A549 (cell line): ENCODE measurements at regions of chr1 and their contacts with region 1.

Region 1: DNA sequence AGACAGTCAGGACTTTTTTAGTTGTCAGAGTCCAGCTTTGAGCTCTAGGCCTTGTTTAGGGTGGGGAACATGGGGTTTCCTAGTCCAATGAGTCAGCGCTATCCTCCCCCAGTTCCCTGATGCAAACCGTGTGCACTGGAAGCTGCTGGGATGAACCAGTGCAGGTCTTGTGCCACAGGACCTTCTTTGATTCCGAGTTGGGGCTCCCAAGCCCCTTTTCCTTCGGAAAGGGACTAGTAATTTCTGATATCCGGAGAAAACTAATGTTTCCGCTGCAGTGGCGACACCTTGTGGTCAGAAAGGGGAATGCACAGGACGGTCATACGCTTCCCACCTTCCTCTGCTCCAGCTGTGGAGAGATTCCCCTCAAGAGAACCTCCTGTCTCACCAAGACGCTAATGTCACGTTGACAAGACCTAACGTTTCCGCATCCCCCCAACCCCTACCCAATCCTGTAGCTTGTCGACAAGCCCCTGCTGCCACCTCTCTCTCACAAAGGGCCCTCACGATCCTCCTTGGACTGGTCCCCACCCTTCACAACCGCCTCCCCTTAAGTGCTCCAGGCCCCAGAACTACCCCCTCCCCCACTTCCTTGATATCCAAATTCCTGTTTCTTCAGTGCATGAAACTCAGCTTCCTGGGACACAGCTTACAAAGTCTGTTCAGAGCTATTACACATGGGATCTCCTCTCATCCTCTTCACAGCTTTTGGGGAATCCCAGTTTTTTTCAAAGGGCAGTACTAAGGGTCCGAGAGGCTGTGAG is 30.9 kb downstream of the GPA33 start:
- DNase-seq: peak; percentile 52 to 67
- ATAC-seq: peak in 1 of 2 experiments; percentile 73; a peak in 3 of 6 replicates
- H3K4me3 ChIP-seq: no peak overlapping the region
- H3K27ac ChIP-seq: peak overlapping the region; percentile 51 to 86
- H3K4me1 ChIP-seq: no peaks in the 10 kb centered on the region
- CTCF ChIP-seq: peak; percentile 92
- EP300 ChIP-seq: no peak
- POLR2A ChIP-seq: no peak
- RAD21 ChIP-seq: peak; percentile 78 to 81

Region 2: GRCh38 chr1:166884040-166884642 is 175.1 kb before region 1 on chr1:
- CTCF ChIA-PET with region 1: interaction called, 48 read pairs
- POLR2A ChIA-PET with region 1: no interaction called
- DNase-seq: peak; percentile 9 to 13
- ATAC-seq: peak; percentile 66 to 92; a peak in 4 of 6 replicates
- H3K4me3 ChIP-seq: no peak overlapping the region
- H3K27ac ChIP-seq: no peak overlapping the region
- H3K4me1 ChIP-seq: no peaks in the 10 kb centered on the region
- CTCF ChIP-seq: peak; percentile 18; the same call in 1 of the 3 replicates
- EP300 ChIP-seq: no peak
- POLR2A ChIP-seq: no peak
- RAD21 ChIP-seq: peak; percentile 27 to 37; a peak in 3 of 5 replicates

Region 3: DNA sequence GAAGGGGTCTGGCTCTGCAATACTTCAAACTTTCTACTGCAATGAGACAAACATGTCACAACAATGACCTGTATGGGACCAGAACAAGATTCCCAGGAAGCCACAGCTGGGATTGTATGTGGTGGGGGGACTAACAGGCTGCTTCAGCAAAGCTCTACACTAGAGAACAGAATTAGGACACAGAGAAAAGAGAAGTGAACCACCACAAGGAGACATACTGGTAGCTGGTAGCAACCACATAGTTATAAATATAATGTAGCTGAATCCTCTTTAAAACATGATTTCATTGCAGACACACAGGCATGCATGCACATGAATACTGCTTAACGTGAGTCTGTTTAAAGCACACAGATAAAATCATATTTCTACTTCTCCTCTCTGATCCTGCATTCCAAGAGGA is 80.4 kb before region 1 on chr1:
- CTCF ChIA-PET with region 1: interaction called, 14 read pairs
- POLR2A ChIA-PET with region 1: no interaction called
- DNase-seq: no peak
- ATAC-seq: no peak
- H3K4me3 ChIP-seq: no peak overlapping the region
- H3K27ac ChIP-seq: no peak overlapping the region
- H3K4me1 ChIP-seq: peaks cover 3% of the 10 kb centered on the region; the same call in 1 of the 3 replicates
- CTCF ChIP-seq: no peak
- EP300 ChIP-seq: no peak
- POLR2A ChIP-seq: no peak
- RAD21 ChIP-seq: no peak

Region 4: DNA sequence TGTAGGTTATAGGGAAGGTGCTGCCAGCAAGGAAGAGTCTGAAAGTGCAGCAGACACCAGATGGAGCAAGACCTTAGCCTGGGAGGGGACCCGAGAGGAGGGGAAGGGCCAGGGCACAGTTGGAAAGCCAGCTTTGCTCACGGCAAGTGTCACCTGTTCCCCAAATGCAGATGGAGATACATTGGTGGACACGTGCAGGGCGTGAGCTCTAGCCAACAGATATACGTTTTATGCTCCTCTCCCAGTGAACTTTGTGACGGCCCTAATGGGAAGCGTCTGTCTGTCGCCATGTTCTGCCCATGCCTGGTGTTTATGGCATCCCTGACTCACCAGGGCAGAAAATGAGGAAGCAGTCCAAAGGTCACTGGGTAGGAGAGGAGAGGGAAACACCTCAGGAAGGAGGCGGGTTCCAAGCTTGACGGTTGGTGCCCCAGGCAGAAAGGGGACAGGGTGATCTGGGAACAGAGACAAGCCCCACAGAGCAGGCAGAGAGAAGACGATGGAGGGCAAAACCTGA is 23.3 kb after region 1 on chr1:
- CTCF ChIA-PET with region 1: interaction called, 31 read pairs
- POLR2A ChIA-PET with region 1: no interaction called
- DNase-seq: peak; percentile 65 to 77
- ATAC-seq: peak; percentile 90 to 92
- H3K4me3 ChIP-seq: no peak overlapping the region
- H3K27ac ChIP-seq: peak overlapping the region; percentile 44 to 77; a peak in 5 of 6 replicates
- H3K4me1 ChIP-seq: peaks cover 15% of the 10 kb centered on the region
- CTCF ChIP-seq: no peak
- EP300 ChIP-seq: no peak
- POLR2A ChIP-seq: no peak
- RAD21 ChIP-seq: no peak

Region 5: DNA sequence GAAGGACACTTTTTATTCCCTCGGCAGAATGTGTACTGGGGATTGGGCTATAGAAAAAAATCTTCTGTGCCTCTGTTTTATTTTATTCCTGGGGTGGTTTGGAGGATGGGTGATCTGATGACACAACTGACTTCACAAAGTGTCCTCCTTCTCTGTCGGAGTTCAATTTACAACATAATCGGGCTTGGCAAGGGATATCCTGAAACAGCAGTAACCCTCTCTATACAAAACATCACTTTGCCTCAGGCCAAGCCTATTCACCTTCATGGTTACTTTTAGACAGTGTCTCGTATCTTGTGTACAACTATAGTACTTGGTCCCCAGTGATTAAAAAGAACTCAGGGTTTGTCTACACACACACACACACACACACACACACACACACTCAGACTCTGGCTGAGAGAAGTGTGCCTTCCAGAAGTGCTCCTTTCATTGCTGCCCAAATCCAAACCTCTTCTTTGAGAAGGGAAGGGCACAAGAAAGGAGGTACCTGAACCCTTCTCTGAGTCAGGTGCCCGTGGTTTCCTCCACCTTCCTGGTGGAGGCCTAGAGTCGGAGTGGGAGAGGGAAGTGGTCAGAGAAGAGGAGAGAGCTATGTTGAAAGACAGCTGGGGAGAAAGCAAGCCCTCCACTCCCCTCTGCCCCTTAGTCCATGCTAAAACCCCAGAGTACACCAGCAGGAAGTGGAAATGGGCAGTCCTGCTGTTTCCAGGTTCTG is 99.0 kb after region 1 on chr1:
- CTCF ChIA-PET with region 1: no interaction called
- POLR2A ChIA-PET with region 1: no interaction called
- DNase-seq: no peak
- ATAC-seq: no peak
- H3K4me3 ChIP-seq: no peak overlapping the region
- H3K27ac ChIP-seq: no peak overlapping the region
- H3K4me1 ChIP-seq: no peaks in the 10 kb centered on the region
- CTCF ChIP-seq: no peak
- EP300 ChIP-seq: no peak
- POLR2A ChIP-seq: no peak
- RAD21 ChIP-seq: no peak

Region 6: DNA sequence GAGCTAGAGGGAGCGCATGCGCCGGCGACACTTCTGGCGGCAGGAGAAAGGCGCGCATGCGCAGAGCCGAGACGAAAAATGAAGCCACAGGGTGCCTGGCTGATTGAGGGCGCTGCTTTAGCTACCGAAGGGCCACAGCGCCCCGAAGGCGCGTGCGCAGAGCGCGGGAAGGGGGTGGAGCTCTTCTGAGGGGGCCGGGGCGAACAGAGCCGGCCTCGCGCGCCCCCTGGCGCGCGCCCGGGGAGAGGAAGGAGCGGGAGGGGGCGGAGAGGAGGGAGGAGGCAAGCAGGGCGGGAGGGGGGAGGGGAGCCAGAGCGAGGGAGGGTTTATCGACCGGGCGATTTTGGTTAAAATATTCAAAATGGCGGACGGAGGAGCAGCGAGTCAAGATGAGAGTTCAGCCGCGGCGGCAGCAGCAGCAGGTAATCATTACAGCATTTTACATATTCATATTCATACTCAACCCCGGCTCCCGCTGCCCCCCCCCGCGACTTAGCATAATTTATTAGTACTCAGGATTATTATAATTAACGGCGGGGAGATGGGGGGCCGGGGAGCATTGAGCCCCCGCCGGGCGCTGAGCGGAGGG is 161.4 kb after region 1 on chr1 and contains the start of gene POU2F1:
- CTCF ChIA-PET with region 1: interaction called, 20 read pairs
- POLR2A ChIA-PET with region 1: interaction called, 4 read pairs
- DNase-seq: peak; percentile 75 to 97
- ATAC-seq: peak; percentile 61 to 87
- H3K4me3 ChIP-seq: peak within 1 kb of the TSS; percentile 95
- H3K27ac ChIP-seq: peak within 1 kb of the TSS; percentile 92 to 97
- H3K4me1 ChIP-seq: peaks cover 26% of the 10 kb centered on the region
- CTCF ChIP-seq: peak; percentile 73
- EP300 ChIP-seq: no peak
- POLR2A ChIP-seq: peak; percentile 22; the same call in 1 of the 2 replicates
- RAD21 ChIP-seq: peak in 1 of 2 experiments; percentile 70; a peak in 4 of 5 replicates
- polyA plus RNA-seq, gene POU2F1: 9.4 and 10.5 TPM in 2 replicates